HCT116 (cell line): ENCODE measurements at regions of chr11 and their contacts with region 1.

Region 1: GRCh38 chr11:125111343-125112207 is at the start of gene TMEM218:
- DNase-seq: peak; percentile 97
- ATAC-seq: peak; percentile 98
- H3K4me3 ChIP-seq: peak within 1 kb of the TSS; percentile 68 to 98
- H3K27ac ChIP-seq: peak within 1 kb of the TSS; percentile 45
- H3K4me1 ChIP-seq: peaks cover 3 to 17% of the 10 kb centered on the region in 2 experiments; a peak in 3 of 4 replicates
- H3K27me3 ChIP-seq: no peaks in the 10 kb centered on the region
- CTCF ChIP-seq: no peak
- POLR2A ChIP-seq: peak; percentile 33
- RAD21 ChIP-seq: no peak
- total RNA-seq, gene TMEM218: 17.9 TPM

Region 2: GRCh38 chr11:124739479-124740276 is 371.9 kb before region 1 on chr11 and contains the start of gene NRGN:
- CTCF ChIA-PET with region 1: no interaction called
- POLR2A ChIA-PET with region 1: no interaction called
- RAD21 ChIA-PET with region 1: no interaction called
- intact Hi-C with region 1: no loop called
- DNase-seq: peak; percentile 66
- ATAC-seq: peak; percentile 95
- H3K4me3 ChIP-seq: peak within 1 kb of the TSS; percentile 65 to 84
- H3K27ac ChIP-seq: peak within 1 kb of the TSS; percentile 37
- H3K4me1 ChIP-seq: peaks cover 3 to 15% of the 10 kb centered on the region in 2 experiments; a peak in 3 of 4 replicates
- H3K27me3 ChIP-seq: peaks cover 7% of the 10 kb centered on the region; the same call in 1 of the 2 replicates
- CTCF ChIP-seq: no peak
- POLR2A ChIP-seq: no peak
- RAD21 ChIP-seq: no peak
- total RNA-seq, gene NRGN: 33.3 TPM

Region 3: GRCh38 chr11:125123947-125124617 is 12.5 kb after region 1 on chr11:
- CTCF ChIA-PET with region 1: interaction called, 19 read pairs
- POLR2A ChIA-PET with region 1: interaction called, 21 read pairs
- RAD21 ChIA-PET with region 1: interaction called in 1 of 2 experiments, 3 read pairs
- intact Hi-C with region 1: no loop called
- DNase-seq: peak; percentile 86
- ATAC-seq: peak; percentile 99
- H3K4me3 ChIP-seq: peak overlapping the region; percentile 29 to 52
- H3K27ac ChIP-seq: peak overlapping the region; percentile 26; the same call in 1 of the 2 replicates
- H3K4me1 ChIP-seq: peaks cover 4 to 15% of the 10 kb centered on the region in 2 experiments; a peak in 3 of 4 replicates
- H3K27me3 ChIP-seq: 0 out of 2 replicates have a peak, but pooled peaks cover 4% of the 10 kb centered on the region
- CTCF ChIP-seq: peak; percentile 44 to 72 (median 68); a peak in 5 of 6 replicates
- POLR2A ChIP-seq: peak; percentile 81
- RAD21 ChIP-seq: peak; percentile 37; the same call in 1 of the 2 replicates